ENCODE measurements at regions of chr11 and their contacts with region 1.

Region 1: DNA sequence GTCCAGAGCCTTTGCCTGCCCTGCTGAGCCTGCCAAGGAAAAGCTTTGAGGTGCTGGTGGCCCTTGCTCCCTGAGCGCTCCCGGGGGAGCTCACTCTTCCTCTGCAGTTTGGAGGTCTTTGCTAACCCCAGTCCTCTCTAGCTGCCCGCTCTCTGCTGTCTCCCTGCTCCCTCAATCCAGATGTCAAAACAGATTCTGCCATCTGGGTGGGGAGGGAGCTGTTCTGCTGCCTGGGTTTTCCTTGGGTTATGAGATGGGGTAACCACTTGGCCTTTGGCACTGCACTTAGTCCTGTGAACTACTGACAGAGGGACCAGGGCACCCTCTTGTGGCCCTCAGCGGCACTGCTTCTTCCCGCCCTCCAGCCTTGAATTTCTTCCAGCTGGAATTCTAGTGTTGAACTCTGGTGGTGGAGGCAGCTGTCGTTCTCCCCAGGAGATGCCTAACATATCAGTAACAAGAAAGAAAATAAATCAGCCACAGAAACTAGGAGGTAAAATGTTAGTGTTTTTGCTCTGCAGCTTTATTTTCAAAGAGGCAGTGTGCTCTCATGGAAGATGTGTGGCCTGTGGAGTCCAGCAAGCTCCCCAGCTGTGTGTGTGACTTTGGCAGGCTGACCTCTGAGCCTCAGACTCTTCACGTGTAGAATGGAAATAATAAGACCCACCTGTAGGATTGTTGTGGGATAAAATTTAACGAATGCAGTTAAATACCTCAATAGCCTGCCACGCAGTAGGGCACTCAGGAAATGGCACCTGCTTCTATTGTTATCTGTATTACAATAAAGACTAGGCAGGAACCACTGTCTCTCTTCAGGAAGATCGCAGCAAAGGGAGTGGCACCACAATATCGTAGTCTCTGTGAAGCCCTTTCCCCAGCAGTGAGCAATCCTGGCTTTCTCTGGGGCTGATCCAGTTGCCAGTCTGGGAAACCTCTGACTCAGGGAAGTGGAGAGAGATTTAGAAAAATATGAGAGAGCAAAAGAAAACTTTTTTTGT is 23.4 kb downstream of the ARFGAP2 start:
- DNase-seq: peak; percentile 65 to 96 (median 90)

Region 2: DNA sequence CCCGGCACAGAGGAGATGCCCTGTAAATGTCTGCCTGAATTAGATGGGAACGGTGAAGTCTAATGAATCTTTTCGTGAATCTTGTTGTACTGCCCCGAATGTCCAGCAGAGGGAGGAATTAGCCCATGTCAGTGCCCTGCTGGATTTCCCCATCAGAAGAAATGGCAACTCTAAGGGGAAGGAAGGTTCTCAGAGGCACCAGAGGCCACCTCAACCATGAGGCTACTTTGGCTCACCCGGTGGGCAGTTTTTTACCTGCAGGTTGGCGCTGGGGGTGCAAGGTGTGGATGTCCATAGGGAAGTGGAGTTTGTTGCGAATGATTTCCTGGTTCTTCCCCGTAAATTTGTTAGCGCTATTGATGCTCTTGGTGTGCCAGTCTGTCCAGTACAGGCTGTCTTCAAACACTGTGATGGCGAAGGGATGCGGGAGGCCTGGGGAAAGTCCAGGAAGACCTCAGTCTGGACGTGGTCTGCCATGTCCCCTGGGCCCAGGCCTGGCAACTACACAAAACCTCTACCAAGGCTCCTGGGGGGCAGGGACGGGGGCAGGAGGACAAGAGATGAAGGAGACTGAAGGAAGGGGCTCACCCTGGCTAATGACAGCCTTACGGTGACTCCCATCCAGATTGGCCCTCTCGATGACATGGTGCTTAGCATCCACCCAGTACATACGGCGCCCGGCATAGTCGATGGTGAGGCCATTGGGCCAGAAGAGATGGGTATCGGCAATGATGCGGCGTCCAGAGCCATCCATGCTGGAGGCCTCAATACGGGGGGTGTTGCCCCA is 263.4 kb before region 1 on chr11:
- intact Hi-C with region 1: loop called (anchors 2 kb)
- DNase-seq: peak; percentile 26 to 95 (median 83)

Measured in head of caudate nucleus (tissue), 42 donors.